Heart left ventricle (tissue), 16 donors: ENCODE measurements at regions of chr16 and their contacts with region 1.

Region 1: GRCh38 chr16:14249291-14250032 is 178.3 kb downstream of the MRTFB start:
- DNase-seq: peak in 1 of 5 donors; percentile 23
- ATAC-seq: peak in 1 of 4 donors; percentile 12
- H3K4me3 ChIP-seq: no peak overlapping the region
- H3K27ac ChIP-seq: no peak overlapping the region
- H3K4me1 ChIP-seq: peaks cover 0 to 3% (median 0%) of the 10 kb centered on the region in 12 donors
- H3K27me3 ChIP-seq: no peaks in the 10 kb centered on the region
- CTCF ChIP-seq: peak; percentile 66 to 90 (median 78)
- POLR2A ChIP-seq: no peak

Region 2: GRCh38 chr16:14529010-14529669 is 279.7 kb after region 1 on chr16:
- intact Hi-C with region 1: loop called in 6 of 10 experiments (anchors 2 to 10 kb)
- DNase-seq: peak in 4 of 5 donors; percentile 64 to 77 (median 76)
- ATAC-seq: peak; percentile 72 to 91 (median 88)
- H3K4me3 ChIP-seq: peak overlapping the region in 6 of 12 donors; percentile 2 to 42 (median 34)
- H3K27ac ChIP-seq: peak overlapping the region in 6 of 12 donors; percentile 2 to 54 (median 40)
- H3K4me1 ChIP-seq: peaks cover 0 to 26% (median 7%) of the 10 kb centered on the region in 12 donors
- H3K27me3 ChIP-seq: no peaks in the 10 kb centered on the region
- CTCF ChIP-seq: peak; percentile 51 to 80 (median 74)
- POLR2A ChIP-seq: no peak

Region 3: GRCh38 chr16:14600164-14600563 is 350.7 kb after region 1 on chr16:
- intact Hi-C with region 1: loop called in 2 of 10 experiments (anchors 10 kb)
- DNase-seq: no peak
- ATAC-seq: no peak
- H3K4me3 ChIP-seq: no peak overlapping the region
- H3K27ac ChIP-seq: no peak overlapping the region
- H3K4me1 ChIP-seq: no peaks in the 10 kb centered on the region
- H3K27me3 ChIP-seq: no peaks in the 10 kb centered on the region
- CTCF ChIP-seq: peak in 8 of 12 donors; percentile 25 to 48 (median 40)
- POLR2A ChIP-seq: no peak